Activated T-helper 1 cell treated with anti-CD3 and anti-CD28 coated beads, Interleukin-12 subunit alpha, Interleukin-12 subunit beta, Interleukin-2, Interleukin-4 antibody, amounts not matched to agents 30 ng/mL and 10 ng/mL and 1 ng/mL, durations not matched to agents 14 hours and 24 hours and 36 hours (primary cell): ENCODE measurements at regions of chr2 and their contacts with region 1.

Region 1: DNA sequence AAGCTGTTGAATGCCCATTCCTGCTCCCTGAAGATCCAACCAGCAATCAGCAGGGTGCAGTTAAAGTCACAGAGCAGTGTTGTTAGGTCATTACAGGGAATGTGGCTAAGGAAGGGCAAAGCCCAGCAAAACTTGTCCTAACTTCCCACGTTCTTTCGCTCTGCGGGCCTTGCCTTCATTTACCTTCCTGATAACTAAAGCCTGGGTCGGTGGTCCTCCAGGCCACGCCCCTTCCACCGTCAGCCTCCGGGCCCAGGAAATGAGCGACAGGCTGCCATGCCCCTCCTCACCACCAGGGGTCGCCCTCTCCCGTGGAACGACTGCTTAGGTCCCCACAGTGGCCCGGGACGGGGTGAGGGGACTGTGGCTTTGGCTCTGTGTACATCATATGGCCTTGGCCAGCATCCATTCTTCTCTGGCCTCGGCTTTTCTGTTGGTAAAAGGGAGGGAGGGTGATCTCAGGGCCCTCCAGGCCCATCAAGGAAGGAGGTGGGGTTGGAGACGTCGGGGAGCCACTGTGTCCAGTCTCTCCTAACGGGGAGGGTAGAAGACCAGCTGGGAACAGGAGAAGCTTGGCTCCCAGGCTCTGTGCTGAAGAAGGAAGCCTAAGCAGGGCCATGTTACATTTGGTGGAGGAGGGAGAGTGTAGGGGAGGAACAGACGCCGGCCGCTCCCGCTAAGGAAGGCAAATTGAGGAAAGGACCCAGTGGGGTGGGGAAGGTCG is 2.2 kb downstream of the SH2D6 start:
- DNase-seq: peak; percentile 86
- H3K4me3 Mint-ChIP-seq: peak overlapping the region; percentile 80
- H3K27ac Mint-ChIP-seq: peak overlapping the region; percentile 84
- H3K4me1 Mint-ChIP-seq: peaks cover 34% of the 10 kb centered on the region
- H3K27me3 Mint-ChIP-seq: no peaks in the 10 kb centered on the region

Region 2: GRCh38 chr2:85095094-85095493 is 325.6 kb before region 1 on chr2:
- intact Hi-C with region 1: no loop called
- DNase-seq: no peak
- H3K4me3 Mint-ChIP-seq: no peak overlapping the region
- H3K27ac Mint-ChIP-seq: no peak overlapping the region
- H3K4me1 Mint-ChIP-seq: no peaks in the 10 kb centered on the region
- H3K27me3 Mint-ChIP-seq: no peaks in the 10 kb centered on the region

Region 3: DNA sequence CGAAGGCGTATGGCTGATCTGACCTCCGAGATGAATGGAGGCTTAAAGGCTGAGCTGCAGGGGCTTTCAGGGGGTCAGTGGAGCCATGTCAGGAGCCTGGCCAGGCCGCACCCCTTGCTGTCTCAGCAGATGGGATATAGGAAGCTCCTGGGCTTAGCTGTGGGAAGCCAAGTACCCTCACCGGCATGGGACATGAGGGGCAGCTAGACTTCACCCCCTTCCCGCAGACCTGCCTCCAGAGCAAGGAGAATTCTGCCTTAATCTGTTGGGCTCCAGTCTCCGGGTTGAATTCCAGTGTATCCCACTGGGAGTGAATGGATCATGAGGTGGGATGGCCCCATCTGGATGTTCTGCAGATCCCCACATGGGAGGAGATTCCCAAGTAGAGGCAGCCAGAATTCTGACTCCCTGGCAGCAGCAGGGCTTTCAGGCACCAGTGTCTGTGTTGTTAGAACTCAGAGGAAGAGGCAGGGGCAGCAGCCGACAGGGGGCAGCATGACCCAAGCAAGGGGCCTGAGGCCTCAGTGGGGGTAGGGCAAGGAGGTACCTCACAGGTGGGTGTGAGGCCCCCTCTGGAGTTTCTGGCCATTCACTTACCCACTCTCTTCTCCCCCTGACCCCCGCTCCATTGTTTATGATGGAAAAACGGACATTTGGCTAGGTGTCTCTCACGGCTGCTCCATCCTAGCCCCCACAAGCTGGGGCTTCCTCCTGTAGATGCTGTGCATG is 29.6 kb before region 1 on chr2:
- intact Hi-C with region 1: loop called (anchors 1 kb)
- DNase-seq: peak; percentile 54
- H3K4me3 Mint-ChIP-seq: no peak overlapping the region
- H3K27ac Mint-ChIP-seq: no peak overlapping the region
- H3K4me1 Mint-ChIP-seq: peaks cover 21% of the 10 kb centered on the region
- H3K27me3 Mint-ChIP-seq: no peaks in the 10 kb centered on the region

Region 4: GRCh38 chr2:85538486-85539360 is 118.0 kb after region 1 on chr2 and contains the start of gene MAT2A:
- intact Hi-C with region 1: loop called (anchors 1 kb)
- DNase-seq: peak; percentile 88
- H3K4me3 Mint-ChIP-seq: peak within 1 kb of the TSS; percentile 99
- H3K27ac Mint-ChIP-seq: peak within 1 kb of the TSS; percentile 97
- H3K4me1 Mint-ChIP-seq: peaks cover 56% of the 10 kb centered on the region
- H3K27me3 Mint-ChIP-seq: no peaks in the 10 kb centered on the region
- total RNA-seq, gene MAT2A: 461 and 480 TPM in 2 replicates

Region 5: DNA sequence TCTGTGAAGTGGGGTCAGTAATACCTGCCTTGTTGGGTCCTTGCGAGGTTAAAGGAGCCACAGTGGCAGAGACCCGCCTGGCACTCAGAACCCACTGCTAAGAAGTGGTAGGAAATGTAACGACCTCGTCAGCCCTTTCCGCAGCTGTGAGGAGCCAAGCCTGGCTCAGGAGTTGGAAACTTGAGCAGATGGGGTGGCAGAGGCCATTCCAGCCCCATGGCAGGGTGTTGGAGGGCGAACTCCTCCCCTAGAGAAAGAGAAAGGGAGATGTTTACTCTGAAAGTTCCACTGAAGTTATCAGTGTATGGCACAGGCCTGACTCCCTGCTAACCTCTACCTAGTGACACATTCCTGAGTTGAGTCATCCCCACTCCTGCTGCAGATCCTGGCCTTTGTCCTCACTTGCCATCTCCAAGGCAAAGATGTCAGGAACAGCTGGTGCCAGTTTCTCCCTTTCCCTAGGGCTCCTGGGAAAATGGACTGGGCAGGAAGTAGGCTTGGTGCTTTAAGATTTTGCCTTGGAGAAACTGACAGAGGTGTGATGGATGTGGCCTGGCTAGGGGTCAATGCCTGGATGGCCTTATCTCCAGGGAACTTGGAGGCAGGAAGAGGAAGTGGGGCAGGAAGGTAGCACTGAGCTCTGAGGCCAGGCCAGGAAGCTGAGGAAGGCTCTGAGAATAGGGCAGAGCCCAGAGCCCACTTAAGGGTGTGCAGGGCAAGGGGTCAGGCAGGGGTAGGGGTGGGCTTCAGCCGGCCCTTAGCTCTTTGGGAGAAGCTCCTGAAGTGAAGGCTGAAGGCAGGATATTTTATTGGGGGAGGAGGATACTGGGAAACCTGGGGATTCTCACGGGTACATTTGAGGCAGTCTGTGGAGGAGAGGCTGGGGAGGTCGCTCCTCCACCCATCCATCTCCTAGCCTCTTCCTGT is 164.4 kb after region 1 on chr2:
- intact Hi-C with region 1: loop called (anchors 1 kb)
- DNase-seq: no peak
- H3K4me3 Mint-ChIP-seq: peak overlapping the region; percentile 88
- H3K27ac Mint-ChIP-seq: peak overlapping the region; percentile 94
- H3K4me1 Mint-ChIP-seq: peaks cover 43% of the 10 kb centered on the region
- H3K27me3 Mint-ChIP-seq: no peaks in the 10 kb centered on the region

Region 6: DNA sequence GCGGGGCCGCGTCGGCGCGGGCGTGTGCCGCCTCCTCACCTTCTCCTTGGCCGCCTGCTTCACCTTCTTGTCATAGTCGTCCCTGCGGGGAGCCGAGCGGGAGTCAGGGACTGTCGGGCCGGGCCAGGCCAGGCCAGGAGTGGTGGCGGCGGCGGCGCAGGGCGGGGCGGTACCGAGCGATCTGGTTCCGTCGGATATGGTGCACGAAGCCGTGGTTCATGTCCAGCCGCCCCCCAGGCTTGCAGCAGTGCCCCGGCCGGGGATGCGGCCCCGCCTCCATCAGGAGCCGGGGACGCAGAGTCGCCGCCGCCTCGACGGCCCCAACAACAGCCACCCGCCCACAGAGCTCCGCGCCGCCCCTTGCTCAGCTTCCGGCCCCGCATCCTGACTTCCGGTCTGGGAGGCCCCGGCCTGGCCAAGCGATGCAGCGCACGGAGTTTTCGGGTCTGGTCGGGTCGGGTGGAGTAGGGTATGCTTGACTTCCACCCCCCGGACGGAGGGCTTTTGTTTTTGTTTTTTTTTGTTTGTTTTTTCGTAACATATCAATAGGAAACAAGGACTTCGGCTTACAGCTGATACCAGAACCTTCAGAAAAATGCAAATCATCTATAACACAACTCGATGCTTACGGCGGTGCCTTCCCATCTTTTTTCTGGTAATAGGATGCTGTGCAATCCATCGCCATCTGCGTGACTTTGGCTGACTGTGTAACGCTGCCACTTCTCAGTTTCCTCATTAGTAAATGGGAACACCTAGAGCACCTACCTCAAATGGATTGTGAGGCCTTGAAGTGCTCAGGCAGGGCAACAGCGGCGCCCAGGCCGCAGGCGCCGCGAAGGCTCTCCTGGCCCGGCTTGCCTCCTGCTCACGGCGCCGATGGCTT is 191.2 kb after region 1 on chr2 and contains the start of gene C2orf68:
- intact Hi-C with region 1: loop called (anchors 1 kb)
- DNase-seq: peak; percentile 86
- H3K4me3 Mint-ChIP-seq: peak within 1 kb of the TSS; percentile 98
- H3K27ac Mint-ChIP-seq: peak within 1 kb of the TSS; percentile 89
- H3K4me1 Mint-ChIP-seq: peaks cover 12% of the 10 kb centered on the region
- H3K27me3 Mint-ChIP-seq: no peaks in the 10 kb centered on the region
- total RNA-seq, gene C2orf68: 36.3 and 36.7 TPM in 2 replicates

Region 7: GRCh38 chr2:86440631-86441391 is 1020.1 kb after region 1 on chr2 and contains the start of gene KDM3A:
- intact Hi-C with region 1: loop called (anchors 10 kb)
- DNase-seq: peak; percentile 99
- H3K4me3 Mint-ChIP-seq: peak within 1 kb of the TSS; percentile 96
- H3K27ac Mint-ChIP-seq: peak within 1 kb of the TSS; percentile 98
- H3K4me1 Mint-ChIP-seq: peaks cover 50% of the 10 kb centered on the region
- H3K27me3 Mint-ChIP-seq: peaks cover 11% of the 10 kb centered on the region
- total RNA-seq, gene KDM3A: 61.6 and 67.3 TPM in 2 replicates